Activated CD4-positive, alpha-beta T cell treated with anti-CD3 and anti-CD28 coated beads for 36 hours (primary cell): ENCODE measurements at regions of chr22 and their contacts with region 1.

Region 1: DNA sequence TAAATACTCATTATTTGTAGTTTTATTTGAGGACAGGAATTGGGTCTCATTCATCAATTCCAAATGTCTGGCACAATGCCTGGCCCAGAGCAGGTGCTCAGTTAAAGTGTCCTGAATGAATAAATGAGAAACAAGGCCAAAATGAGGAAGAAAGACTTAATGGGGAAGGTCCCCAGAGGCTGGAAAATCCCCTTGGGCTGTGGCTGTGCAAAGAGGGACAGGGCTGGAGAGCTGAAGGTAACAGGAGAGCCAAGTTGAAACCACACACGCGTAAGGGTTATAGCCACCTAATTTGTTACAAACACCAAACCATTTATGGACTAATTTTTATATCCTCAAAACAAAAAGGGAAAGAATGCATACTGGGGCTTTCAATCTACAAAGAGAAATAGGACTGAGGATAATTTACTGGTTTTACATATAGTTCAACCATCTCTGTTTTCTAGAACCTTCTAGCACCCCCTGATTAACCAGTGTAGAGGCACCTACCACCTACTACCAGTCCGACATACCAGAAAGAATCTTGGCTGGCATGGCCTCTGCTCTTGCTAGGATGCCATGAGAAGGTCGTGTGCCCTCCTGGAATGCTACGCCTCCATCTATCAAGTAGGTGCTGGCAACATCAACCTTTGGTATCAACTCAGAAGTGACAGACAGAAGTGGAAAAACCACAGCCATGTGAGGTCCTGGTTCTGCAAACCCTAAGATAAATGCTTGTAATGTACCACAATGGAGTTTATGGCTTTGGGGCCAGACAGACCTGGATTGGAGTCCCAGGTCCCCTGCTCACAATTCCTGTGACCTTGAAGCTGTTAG is 28.4 kb downstream of the MYH9 start:
- DNase-seq: no peak
- ATAC-seq: no peak
- H3K4me3 Mint-ChIP-seq: peak overlapping the region; percentile 45
- H3K27ac Mint-ChIP-seq: peak overlapping the region; percentile 96
- H3K4me1 Mint-ChIP-seq: peaks cover 98% of the 10 kb centered on the region
- H3K27me3 Mint-ChIP-seq: no peaks in the 10 kb centered on the region

Region 2: GRCh38 chr22:36379593-36380361 is 20.4 kb after region 1 on chr22:
- CTCF ChIA-PET with region 1: interaction called, 13 read pairs
- POLR2A ChIA-PET with region 1: interaction called, 24 read pairs
- intact Hi-C with region 1: no loop called
- DNase-seq: peak; percentile 62
- ATAC-seq: peak; percentile 13
- H3K4me3 Mint-ChIP-seq: peak overlapping the region; percentile 75
- H3K27ac Mint-ChIP-seq: peak overlapping the region; percentile 99
- H3K4me1 Mint-ChIP-seq: peaks cover 92% of the 10 kb centered on the region
- H3K27me3 Mint-ChIP-seq: no peaks in the 10 kb centered on the region